OCI-LY7 (cell line): ENCODE measurements at regions of chr3 and their contacts with region 1.

Region 1: DNA sequence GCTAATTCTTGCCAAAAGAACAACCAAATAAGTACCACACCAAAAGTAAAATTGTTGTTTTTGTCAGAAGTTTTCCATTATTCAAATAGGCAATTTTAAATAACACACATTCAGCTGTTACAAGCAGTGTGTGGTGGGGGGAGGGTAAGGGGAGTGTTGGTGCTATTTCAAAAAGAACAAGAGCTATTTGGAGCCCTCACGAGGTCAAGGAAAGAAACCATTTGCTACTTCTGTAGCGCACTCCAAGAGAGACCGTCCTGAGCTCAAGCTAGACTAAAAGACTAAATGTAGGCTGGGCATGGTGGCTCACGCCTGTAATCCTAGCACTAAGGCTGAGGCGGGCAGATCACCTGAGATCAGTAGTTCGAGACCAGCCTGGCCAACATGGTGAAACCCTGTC is 21.2 kb upstream of the IGF2BP2 start:
- DNase-seq: no peak
- H3K4me3 ChIP-seq: no peak overlapping the region
- H3K27ac ChIP-seq: no peak overlapping the region
- H3K4me1 ChIP-seq: no peaks in the 10 kb centered on the region
- CTCF ChIP-seq: no peak

Region 2: GRCh38 chr3:185503521-185503920 is 342.5 kb before region 1 on chr3:
- CTCF ChIA-PET with region 1: no interaction called
- POLR2A ChIA-PET with region 1: interaction called, 11 read pairs
- intact Hi-C with region 1: no loop called
- DNase-seq: no peak
- H3K4me3 ChIP-seq: no peak overlapping the region
- H3K27ac ChIP-seq: no peak overlapping the region
- H3K4me1 ChIP-seq: no peaks in the 10 kb centered on the region
- CTCF ChIP-seq: no peak

Region 3: DNA sequence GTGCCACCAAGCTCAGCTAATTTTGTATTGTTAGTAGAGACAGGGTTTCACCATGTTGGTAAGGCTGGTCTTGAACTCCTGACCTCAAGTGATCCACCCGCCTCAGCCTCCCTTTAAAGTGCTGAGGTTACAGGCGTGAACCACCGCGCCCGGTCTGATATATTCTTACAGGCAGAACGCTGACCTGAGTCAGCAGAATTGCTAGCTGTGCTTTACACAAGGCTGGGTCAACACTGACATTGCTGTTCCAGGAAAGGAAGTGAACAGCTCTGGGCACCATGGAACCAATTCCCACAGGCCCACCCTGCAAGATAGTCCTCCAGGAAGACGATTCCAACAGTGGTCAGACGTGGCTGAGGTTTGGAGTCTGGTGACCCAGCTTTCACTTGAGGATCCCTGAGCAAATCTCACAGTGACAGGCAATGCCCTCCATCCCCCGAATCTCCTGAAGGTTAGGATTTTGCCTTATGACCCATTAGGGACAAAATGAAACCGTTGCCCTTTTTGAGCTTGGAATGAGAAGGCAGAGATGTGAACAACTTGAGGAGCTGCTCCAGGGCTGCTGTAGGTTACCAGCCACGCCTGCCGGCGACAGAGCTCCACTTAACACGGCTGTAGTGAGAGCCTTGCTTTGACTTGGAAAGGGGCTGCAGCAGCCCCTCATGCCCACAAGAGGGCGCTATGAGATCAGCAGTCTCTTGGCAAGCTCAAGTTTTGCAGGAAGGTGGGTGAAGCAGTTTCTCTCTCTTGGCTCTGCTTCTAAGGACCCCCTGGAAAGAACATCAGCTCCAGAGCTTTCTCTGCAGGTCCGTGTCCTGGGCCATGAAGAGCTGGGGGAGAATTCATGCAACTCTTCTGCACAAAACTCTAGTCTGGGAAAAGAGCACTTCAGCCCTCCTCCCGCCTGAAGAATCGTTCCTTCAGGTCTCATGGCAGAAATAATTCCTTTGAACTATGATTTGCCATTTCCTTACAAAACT is 185.8 kb before region 1 on chr3:
- CTCF ChIA-PET with region 1: no interaction called
- POLR2A ChIA-PET with region 1: no interaction called
- intact Hi-C with region 1: no loop called
- DNase-seq: peak; percentile 76
- H3K4me3 ChIP-seq: no peak overlapping the region
- H3K27ac ChIP-seq: no peak overlapping the region
- H3K4me1 ChIP-seq: no peaks in the 10 kb centered on the region
- CTCF ChIP-seq: peak; percentile 98